ENCODE measurements at regions of chr16 and their contacts with region 1.

Region 1: GRCh38 chr16:77613095-77613494 is 109.2 kb upstream of the NUDT7 start:
- DNase-seq: no peak
- H3K4me3 ChIP-seq: no peak overlapping the region
- H3K27ac ChIP-seq: no peak overlapping the region
- H3K4me1 ChIP-seq: no peaks in the 10 kb centered on the region
- H3K27me3 ChIP-seq: no peaks in the 10 kb centered on the region
- CTCF ChIP-seq: no peak

Region 2: GRCh38 chr16:77647726-77648125 is 34.6 kb after region 1 on chr16:
- CTCF ChIA-PET with region 1: no interaction called
- dilution Hi-C with region 1: no loop called
- in situ Hi-C with region 1: loop called in 1 of 2 experiments (anchors 10 kb)
- intact Hi-C with region 1: loop called (anchors 5 kb)
- DNase-seq: no peak
- H3K4me3 ChIP-seq: no peak overlapping the region
- H3K27ac ChIP-seq: no peak overlapping the region
- H3K4me1 ChIP-seq: no peaks in the 10 kb centered on the region
- H3K27me3 ChIP-seq: no peaks in the 10 kb centered on the region
- CTCF ChIP-seq: no peak

Measured in mammary epithelial cell (primary cell).